ENCODE measurements at regions of chr3 and their contacts with region 1.

Region 1: GRCh38 chr3:109784852-109785631 is 447.7 kb upstream of the DPPA4 start:
- DNase-seq: no peak
- H3K4me3 ChIP-seq: no peak overlapping the region
- H3K27ac ChIP-seq: no peak overlapping the region
- H3K4me1 ChIP-seq: no peaks in the 10 kb centered on the region
- H3K27me3 ChIP-seq: no peaks in the 10 kb centered on the region
- CTCF ChIP-seq: no peak
- EP300 ChIP-seq: no peak
- POLR2A ChIP-seq: no peak

Region 2: DNA sequence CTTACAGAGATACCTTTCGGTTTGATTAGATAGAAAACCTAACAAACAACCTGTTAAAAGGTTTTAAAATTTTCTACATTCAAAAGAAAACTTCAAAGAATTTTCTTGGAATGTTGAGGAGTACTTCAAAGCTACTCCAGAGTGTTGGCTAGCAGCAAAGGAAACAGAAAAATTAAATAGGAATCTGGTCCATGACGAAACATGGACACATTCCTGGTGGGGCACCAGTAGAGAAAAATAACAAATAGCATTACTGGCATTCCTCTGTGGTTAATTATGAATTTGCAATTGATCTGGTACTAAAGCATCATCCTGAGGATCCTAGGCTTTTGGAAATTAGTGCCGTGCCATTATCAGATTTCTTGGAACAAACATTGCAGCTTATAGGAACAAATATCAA is 388.2 kb before region 1 on chr3:
- in situ Hi-C with region 1: no loop called
- intact Hi-C with region 1: no loop called
- DNase-seq: no peak
- H3K4me3 ChIP-seq: no peak overlapping the region
- H3K27ac ChIP-seq: no peak overlapping the region
- H3K4me1 ChIP-seq: no peaks in the 10 kb centered on the region
- H3K27me3 ChIP-seq: no peaks in the 10 kb centered on the region
- CTCF ChIP-seq: no peak
- EP300 ChIP-seq: no peak
- POLR2A ChIP-seq: no peak

Region 3: GRCh38 chr3:109943181-109943580 is 158.1 kb after region 1 on chr3:
- in situ Hi-C with region 1: no loop called
- intact Hi-C with region 1: no loop called
- DNase-seq: no peak
- H3K4me3 ChIP-seq: no peak overlapping the region
- H3K27ac ChIP-seq: no peak overlapping the region
- H3K4me1 ChIP-seq: no peaks in the 10 kb centered on the region
- H3K27me3 ChIP-seq: no peaks in the 10 kb centered on the region
- CTCF ChIP-seq: no peak
- EP300 ChIP-seq: no peak
- POLR2A ChIP-seq: no peak

Region 4: GRCh38 chr3:110174908-110175307 is 389.9 kb after region 1 on chr3:
- in situ Hi-C with region 1: no loop called
- intact Hi-C with region 1: loop called (anchors 5 kb)
- DNase-seq: no peak
- H3K4me3 ChIP-seq: no peak overlapping the region
- H3K27ac ChIP-seq: no peak overlapping the region
- H3K4me1 ChIP-seq: no peaks in the 10 kb centered on the region
- H3K27me3 ChIP-seq: no peaks in the 10 kb centered on the region
- CTCF ChIP-seq: no peak
- EP300 ChIP-seq: no peak
- POLR2A ChIP-seq: no peak

Region 5: GRCh38 chr3:111534701-111535100 is 1749.7 kb after region 1 on chr3:
- in situ Hi-C with region 1: no loop called
- intact Hi-C with region 1: loop called (anchors 5 kb)
- DNase-seq: no peak
- H3K4me3 ChIP-seq: no peak overlapping the region
- H3K27ac ChIP-seq: no peak overlapping the region
- H3K4me1 ChIP-seq: peaks cover 0 to 10% (median 0%) of the 10 kb centered on the region in 4 donors
- H3K27me3 ChIP-seq: no peaks in the 10 kb centered on the region
- CTCF ChIP-seq: no peak
- EP300 ChIP-seq: no peak
- POLR2A ChIP-seq: no peak

Measured in transverse colon (tissue), 4 donors.